Activated naive CD4-positive, alpha-beta T cell treated with anti-CD3 and anti-CD28 coated beads for 36 hours (primary cell): ENCODE measurements at regions of chr5 and their contacts with region 1.

Region 1: DNA sequence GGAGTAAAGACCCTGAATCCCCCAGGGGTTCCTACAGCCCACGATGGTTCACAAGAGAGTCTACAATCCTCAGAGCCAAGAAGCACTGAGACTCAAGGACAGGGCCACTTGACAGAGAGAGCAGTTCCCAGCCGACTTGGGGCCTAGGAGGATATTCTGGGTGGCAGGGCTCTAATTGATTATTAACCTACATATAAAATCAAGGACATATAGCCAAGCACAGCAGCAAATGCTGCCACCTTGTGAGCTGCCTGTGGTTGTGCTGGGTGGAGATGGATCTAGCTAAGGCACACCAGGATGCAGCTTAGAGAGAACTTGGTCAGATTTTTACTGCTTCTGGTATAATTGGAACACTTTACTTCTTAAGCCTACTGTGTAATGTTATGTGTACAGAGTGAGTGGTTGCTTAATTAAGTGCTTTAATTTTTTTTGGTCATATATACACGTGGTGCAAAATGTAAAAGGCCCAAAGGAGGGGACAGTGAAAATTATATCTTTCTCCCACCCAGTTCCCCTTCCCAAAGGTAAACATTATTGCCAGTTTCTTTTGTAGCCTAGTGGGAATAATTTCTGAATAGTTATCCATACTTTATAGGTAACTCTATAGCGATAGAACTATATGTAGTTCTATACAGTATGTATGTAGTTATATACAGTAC is 78.8 kb downstream of the F2RL2 start:
- DNase-seq: peak; percentile 84
- H3K4me3 Mint-ChIP-seq: peak overlapping the region; percentile 71
- H3K27ac Mint-ChIP-seq: peak overlapping the region; percentile 97
- H3K4me1 Mint-ChIP-seq: peaks cover 86% of the 10 kb centered on the region
- H3K27me3 Mint-ChIP-seq: no peaks in the 10 kb centered on the region

Region 2: GRCh38 chr5:75511435-75512384 is 1032.7 kb before region 1 on chr5 and contains the starts of genes CERT1 and POLK:
- CTCF ChIA-PET with region 1: no interaction called
- intact Hi-C with region 1: loop called (anchors 10 kb)
- DNase-seq: peak; percentile 99
- H3K4me3 Mint-ChIP-seq: peak within 1 kb of the TSS; percentile 96
- H3K27ac Mint-ChIP-seq: peak within 1 kb of the TSS; percentile 89
- H3K4me1 Mint-ChIP-seq: peaks cover 53% of the 10 kb centered on the region
- H3K27me3 Mint-ChIP-seq: no peaks in the 10 kb centered on the region
- total RNA-seq, gene CERT1: 17.1 to 18.5 TPM
- total RNA-seq, gene POLK: 26.8 to 29.0 TPM

Region 3: DNA sequence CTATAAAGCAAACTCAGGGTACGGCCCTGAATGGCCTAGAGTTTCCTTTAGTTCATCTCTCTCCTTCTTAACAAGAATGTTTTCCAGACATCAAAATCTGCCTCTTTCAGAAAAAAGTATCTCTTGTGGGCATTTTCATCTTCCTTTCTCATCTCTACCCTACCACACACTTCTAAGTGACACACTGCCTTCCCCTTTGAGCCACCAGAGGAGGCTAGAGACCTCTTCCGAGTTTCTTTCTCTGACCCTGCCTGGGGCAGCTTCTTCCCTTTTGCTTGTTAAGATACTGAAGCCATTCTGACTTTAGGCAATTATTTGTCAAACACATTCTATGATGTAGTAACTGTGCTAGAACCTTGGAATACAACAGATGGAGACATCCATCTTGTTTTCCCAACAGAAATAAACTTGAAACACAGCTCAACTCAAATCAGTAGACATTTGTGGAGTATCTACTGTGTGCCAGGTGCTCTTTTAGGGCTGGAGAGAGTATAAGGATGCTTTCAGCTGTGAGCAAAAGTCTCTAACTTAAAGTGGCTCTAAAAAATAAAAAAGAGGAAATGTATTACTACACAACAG is 469.8 kb before region 1 on chr5:
- CTCF ChIA-PET with region 1: no interaction called
- intact Hi-C with region 1: loop called (anchors 1 kb)
- DNase-seq: peak; percentile 48
- H3K4me3 Mint-ChIP-seq: no peak overlapping the region
- H3K27ac Mint-ChIP-seq: no peak overlapping the region
- H3K4me1 Mint-ChIP-seq: no peaks in the 10 kb centered on the region
- H3K27me3 Mint-ChIP-seq: peaks cover 36% of the 10 kb centered on the region

Region 4: DNA sequence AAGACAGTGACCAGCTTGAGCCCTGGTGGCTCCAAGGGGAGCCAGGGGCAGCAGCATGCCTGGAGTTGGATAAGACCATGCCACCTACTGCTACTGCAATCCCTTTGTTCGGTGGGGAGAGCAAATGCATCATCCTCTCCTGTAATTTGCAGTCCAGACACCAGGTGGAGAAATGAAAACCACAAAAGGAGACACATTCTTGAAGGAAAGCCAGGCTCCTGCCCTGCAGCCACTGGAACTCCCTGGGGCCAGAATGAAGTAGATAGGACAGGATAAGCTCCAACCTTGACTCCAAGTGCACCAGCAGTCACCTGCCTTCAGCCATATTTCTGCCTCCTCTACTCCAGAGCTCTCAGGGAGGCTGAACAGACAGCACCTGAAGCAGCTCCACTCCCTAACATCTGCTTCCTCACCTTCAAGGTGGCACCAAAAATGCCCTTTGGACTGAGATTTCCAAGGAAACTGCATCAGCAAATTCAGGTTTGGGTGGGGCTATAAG is 206.4 kb before region 1 on chr5:
- CTCF ChIA-PET with region 1: interaction called, 4 read pairs
- intact Hi-C with region 1: loop called (anchors 1 kb)
- DNase-seq: peak; percentile 62
- H3K4me3 Mint-ChIP-seq: no peak overlapping the region
- H3K27ac Mint-ChIP-seq: no peak overlapping the region
- H3K4me1 Mint-ChIP-seq: peaks cover 18% of the 10 kb centered on the region
- H3K27me3 Mint-ChIP-seq: no peaks in the 10 kb centered on the region

Region 5: DNA sequence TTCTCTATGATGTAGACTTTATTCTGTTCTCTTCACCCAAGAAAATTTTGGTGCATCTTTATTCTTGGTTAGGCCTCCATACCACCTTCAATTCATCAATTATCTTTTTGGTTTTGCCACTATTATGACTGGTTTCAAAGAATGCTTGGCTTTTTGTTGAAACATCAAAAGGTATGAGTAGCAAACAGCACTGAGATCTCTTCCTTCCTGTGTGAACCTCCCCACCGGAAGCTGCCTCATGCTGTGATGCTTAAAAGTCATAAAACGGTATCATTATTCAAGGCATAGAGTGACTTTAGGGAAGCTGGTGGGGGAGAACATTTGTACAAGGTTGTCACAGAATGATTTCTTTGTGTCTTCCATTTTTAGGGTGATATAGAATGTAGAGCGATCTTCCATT is 70.7 kb before region 1 on chr5:
- CTCF ChIA-PET with region 1: interaction called, 15 read pairs
- intact Hi-C with region 1: loop called (anchors 1 kb)
- DNase-seq: peak; percentile 90
- H3K4me3 Mint-ChIP-seq: peak overlapping the region; percentile 38
- H3K27ac Mint-ChIP-seq: peak overlapping the region; percentile 92
- H3K4me1 Mint-ChIP-seq: peaks cover 76% of the 10 kb centered on the region
- H3K27me3 Mint-ChIP-seq: no peaks in the 10 kb centered on the region

Region 6: GRCh38 chr5:76582230-76583162 is 38.1 kb after region 1 on chr5:
- CTCF ChIA-PET with region 1: interaction called, 47 read pairs
- intact Hi-C with region 1: loop called (anchors 1 kb)
- DNase-seq: peak; percentile 65
- H3K4me3 Mint-ChIP-seq: no peak overlapping the region
- H3K27ac Mint-ChIP-seq: peak overlapping the region; percentile 36
- H3K4me1 Mint-ChIP-seq: peaks cover 27% of the 10 kb centered on the region
- H3K27me3 Mint-ChIP-seq: no peaks in the 10 kb centered on the region

Region 7: DNA sequence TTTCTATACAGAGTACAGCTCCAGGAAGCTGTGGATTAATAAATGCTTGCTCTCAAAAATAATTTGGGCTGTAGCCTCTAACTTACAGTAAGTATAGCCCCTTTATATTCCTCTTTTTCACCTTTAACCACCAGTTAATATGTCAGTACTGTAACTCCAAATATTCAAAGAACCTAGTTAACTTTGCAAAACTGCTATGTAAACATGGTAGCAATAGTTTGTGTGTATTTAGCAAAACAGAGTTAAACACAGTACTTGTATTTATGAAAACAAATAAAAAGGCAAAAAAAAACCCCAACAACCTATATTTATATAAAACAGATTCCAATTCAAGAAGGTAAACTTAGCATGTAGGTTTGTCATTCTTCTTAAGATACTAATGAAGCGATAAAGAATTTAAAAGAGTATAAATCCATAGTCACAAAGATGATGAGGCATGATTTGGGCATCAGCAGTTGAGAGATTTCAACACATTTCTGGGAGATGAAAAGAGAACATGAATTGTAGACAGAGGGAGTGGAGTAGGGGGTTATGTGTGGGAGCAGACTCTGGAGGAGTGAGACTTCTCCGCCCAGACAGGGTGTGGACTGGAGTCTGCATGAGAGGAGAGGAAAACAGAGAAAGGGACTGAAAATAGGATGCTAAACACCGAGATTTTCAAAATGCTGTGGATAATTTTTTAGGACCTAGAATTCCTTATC is 227.5 kb after region 1 on chr5:
- CTCF ChIA-PET with region 1: interaction called, 5 read pairs
- intact Hi-C with region 1: loop called (anchors 1 kb)
- DNase-seq: no peak
- H3K4me3 Mint-ChIP-seq: no peak overlapping the region
- H3K27ac Mint-ChIP-seq: no peak overlapping the region
- H3K4me1 Mint-ChIP-seq: peaks cover 2% of the 10 kb centered on the region
- H3K27me3 Mint-ChIP-seq: no peaks in the 10 kb centered on the region